ENCODE measurements at regions of chr1 and their contacts with region 1.

Region 1: GRCh38 chr1:206905280-206906164 is 8.3 kb downstream of the IL24 start:
- DNase-seq: peak; percentile 70
- ATAC-seq: peak; percentile 90
- H3K4me3 Mint-ChIP-seq: peak overlapping the region; percentile 34
- H3K27ac Mint-ChIP-seq: peak overlapping the region; percentile 96
- H3K4me1 Mint-ChIP-seq: peaks cover 79% of the 10 kb centered on the region
- H3K27me3 Mint-ChIP-seq: no peaks in the 10 kb centered on the region
- CTCF ChIP-seq: no peak

Region 2: DNA sequence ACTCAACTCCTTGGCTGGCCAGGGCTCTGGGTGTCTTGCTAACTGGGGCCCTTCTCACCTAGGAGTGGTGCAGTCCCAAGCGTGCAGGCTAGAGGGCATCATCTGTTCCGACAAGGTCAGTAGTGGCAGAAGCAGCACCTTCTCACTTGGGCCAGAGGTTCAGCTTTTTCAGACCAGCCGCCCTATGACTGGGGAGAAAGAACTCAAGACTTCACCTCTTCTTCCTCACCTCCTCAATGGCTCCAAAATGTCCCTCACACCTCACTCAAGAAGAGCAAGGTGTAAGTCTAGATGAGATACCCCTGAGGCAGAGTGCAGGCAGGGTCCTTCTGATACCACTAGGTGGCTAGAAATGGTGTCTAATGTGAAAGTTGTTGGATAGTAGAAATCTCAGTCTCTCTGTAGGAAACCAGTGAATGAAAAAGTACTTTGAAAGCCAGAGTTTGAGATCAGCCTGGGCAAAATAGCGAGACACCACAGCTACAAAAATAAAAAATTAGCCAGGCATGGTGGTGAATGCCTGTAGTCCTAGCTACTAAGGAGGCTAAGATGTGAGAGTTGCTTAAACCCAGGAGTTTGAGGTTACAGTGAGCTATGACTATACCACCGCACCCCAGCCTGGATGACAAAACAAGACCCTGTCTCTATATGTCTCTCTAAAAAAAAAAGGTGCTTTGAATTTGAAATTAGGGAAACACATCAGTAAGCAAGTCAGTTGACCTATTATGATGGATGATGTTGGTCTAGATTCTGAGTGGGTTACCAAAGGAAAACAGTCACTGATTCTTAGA is 48.7 kb before region 1 on chr1:
- CTCF ChIA-PET with region 1: interaction called, 20 read pairs
- POLR2A ChIA-PET with region 1: interaction called, 3 read pairs
- intact Hi-C with region 1: no loop called
- DNase-seq: peak; percentile 30
- ATAC-seq: peak; percentile 72
- H3K4me3 Mint-ChIP-seq: no peak overlapping the region
- H3K27ac Mint-ChIP-seq: no peak overlapping the region
- H3K4me1 Mint-ChIP-seq: peaks cover 11% of the 10 kb centered on the region
- H3K27me3 Mint-ChIP-seq: no peaks in the 10 kb centered on the region
- CTCF ChIP-seq: peak; percentile 58

Region 3: GRCh38 chr1:206878456-206878855 is 27.1 kb before region 1 on chr1:
- CTCF ChIA-PET with region 1: interaction called, 10 read pairs
- POLR2A ChIA-PET with region 1: interaction called, 3 read pairs
- intact Hi-C with region 1: no loop called
- DNase-seq: no peak
- ATAC-seq: peak; percentile 49
- H3K4me3 Mint-ChIP-seq: no peak overlapping the region
- H3K27ac Mint-ChIP-seq: no peak overlapping the region
- H3K4me1 Mint-ChIP-seq: peaks cover 3% of the 10 kb centered on the region
- H3K27me3 Mint-ChIP-seq: no peaks in the 10 kb centered on the region
- CTCF ChIP-seq: no peak

Region 4: DNA sequence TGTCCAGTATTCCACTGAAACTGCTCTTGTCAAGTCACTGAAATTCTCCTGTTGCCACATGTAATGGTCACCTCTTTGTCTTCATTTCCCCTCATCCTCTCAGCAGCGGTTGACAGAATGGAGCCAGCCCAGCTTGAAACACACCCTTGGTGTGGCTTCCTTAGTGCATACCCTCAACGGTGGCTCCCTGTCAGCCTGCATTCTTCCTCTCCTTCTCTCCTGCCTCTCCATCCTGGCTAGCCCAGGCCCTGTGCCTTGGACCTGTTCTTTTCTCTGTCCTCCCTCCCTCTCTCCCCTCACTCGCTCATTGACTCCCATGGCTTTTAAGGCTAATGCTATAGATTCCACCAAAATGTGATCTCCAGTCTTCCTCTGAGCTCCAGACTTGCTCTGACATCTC is 12.6 kb after region 1 on chr1:
- CTCF ChIA-PET with region 1: interaction called, 47 read pairs
- POLR2A ChIA-PET with region 1: interaction called, 15 read pairs
- intact Hi-C with region 1: no loop called
- DNase-seq: no peak
- ATAC-seq: no peak
- H3K4me3 Mint-ChIP-seq: peak overlapping the region; percentile 75
- H3K27ac Mint-ChIP-seq: peak overlapping the region; percentile 89
- H3K4me1 Mint-ChIP-seq: peaks cover 64% of the 10 kb centered on the region
- H3K27me3 Mint-ChIP-seq: no peaks in the 10 kb centered on the region
- CTCF ChIP-seq: no peak

Region 5: GRCh38 chr1:206925106-206925736 is 19.7 kb after region 1 on chr1:
- CTCF ChIA-PET with region 1: interaction called, 47 read pairs
- POLR2A ChIA-PET with region 1: interaction called, 15 read pairs
- intact Hi-C with region 1: no loop called
- DNase-seq: peak; percentile 93
- ATAC-seq: peak; percentile 67
- H3K4me3 Mint-ChIP-seq: no peak overlapping the region
- H3K27ac Mint-ChIP-seq: no peak overlapping the region
- H3K4me1 Mint-ChIP-seq: peaks cover 41% of the 10 kb centered on the region
- H3K27me3 Mint-ChIP-seq: no peaks in the 10 kb centered on the region
- CTCF ChIP-seq: no peak